Left lung (tissue), 14 donors: ENCODE measurements at regions of chr1 and their contacts with region 1.

Region 1: GRCh38 chr1:203273206-203273868 is 32.0 kb upstream of the BTG2 start:
- DNase-seq: peak; percentile 73 to 98 (median 89)
- ATAC-seq: peak; percentile 82
- H3K4me3 ChIP-seq: peak overlapping the region in 1 of 2 donors; percentile 44
- H3K27ac ChIP-seq: peak overlapping the region; percentile 72 to 92
- H3K4me1 ChIP-seq: peaks cover 9 to 88% of the 10 kb centered on the region in 2 donors
- H3K27me3 ChIP-seq: no peaks in the 10 kb centered on the region
- CTCF ChIP-seq: peak; percentile 97 to 99

Region 2: GRCh38 chr1:203026031-203026989 is 247.0 kb before region 1 on chr1 and contains the start of gene PPFIA4:
- intact Hi-C with region 1: no loop called
- DNase-seq: peak; percentile 81 to 97 (median 90)
- ATAC-seq: peak; percentile 97
- H3K4me3 ChIP-seq: peak within 1 kb of the TSS; percentile 48 to 50
- H3K27ac ChIP-seq: peak within 1 kb of the TSS; percentile 39 to 74
- H3K4me1 ChIP-seq: peaks cover 0 to 13% of the 10 kb centered on the region in 2 donors
- H3K27me3 ChIP-seq: peaks cover 4 to 20% of the 10 kb centered on the region in 2 donors
- CTCF ChIP-seq: no peak
- polyA plus RNA-seq, gene PPFIA4: 2.6 to 5.1 (median 3.6) TPM

Region 3: DNA sequence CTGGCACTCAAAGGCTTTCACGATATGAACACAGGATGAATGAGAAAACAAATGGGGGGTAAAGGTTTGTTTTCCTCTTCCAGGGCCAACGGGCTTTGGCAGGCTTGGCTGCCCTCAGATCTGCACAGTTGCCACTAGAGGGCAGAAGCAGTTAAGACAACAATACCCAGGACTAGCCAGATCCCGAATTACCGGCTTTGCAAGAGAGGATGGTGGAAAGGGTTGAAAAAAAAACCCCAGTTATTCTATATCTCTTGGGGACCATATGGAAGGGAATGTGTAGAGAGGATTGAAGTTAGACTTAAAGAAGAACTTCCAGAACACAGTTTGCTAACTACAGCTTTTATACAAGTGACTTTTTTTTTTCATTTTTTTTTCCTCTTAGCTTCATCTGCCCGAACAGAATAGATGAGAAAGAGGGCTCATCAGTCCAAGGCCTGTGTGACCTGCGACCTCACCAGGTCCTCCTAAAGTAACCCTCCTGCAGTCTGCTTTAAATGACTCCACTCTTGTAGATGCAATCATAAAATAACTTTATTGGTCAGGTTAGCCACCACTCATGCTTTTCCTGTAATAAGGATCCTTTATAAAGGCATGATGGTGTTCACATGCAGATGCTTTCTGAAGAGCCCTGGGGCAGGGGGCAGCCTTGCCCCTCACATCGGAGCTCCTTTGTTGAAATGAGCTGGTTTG is 66.9 kb after region 1 on chr1:
- intact Hi-C with region 1: loop called in 1 of 2 experiments (anchors 5 kb)
- DNase-seq: peak in 3 of 4 donors; percentile 68 to 91 (median 79)
- ATAC-seq: peak; percentile 88
- H3K4me3 ChIP-seq: no peak overlapping the region
- H3K27ac ChIP-seq: no peak overlapping the region
- H3K4me1 ChIP-seq: no peaks in the 10 kb centered on the region
- H3K27me3 ChIP-seq: peaks cover 0 to 22% of the 10 kb centered on the region in 2 donors
- CTCF ChIP-seq: peak; percentile 90 to 92

Region 4: DNA sequence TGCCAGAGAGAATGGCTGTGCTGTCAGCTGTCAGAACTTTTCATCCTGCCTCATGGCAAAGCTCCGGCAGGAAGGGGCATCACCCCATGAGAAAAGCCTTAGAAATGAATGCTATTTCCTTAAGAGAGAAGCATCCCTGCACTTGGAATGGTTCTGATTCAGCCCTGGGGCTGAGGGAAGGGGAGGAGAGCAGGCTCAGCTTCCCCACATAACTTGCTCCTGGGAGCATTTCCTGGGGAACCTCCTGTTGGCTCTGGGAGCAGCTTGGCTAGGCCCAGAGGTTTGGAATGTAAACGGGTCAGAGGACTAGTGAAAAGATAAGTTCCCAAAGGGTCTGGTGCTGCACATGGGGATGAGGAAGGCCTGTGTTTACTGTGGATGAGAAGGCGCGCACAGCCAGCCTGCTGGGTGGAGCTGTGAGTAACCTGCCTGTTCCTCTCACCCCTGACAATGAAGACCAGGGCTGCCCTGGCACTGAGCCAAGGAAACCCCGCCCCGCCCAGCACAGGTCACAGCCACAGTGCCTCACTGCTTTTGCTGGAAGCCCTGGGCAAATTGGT is 207.3 kb after region 1 on chr1:
- intact Hi-C with region 1: loop called in 1 of 2 experiments (anchors 10 kb)
- DNase-seq: peak in 3 of 4 donors; percentile 33 to 89 (median 57)
- ATAC-seq: peak; percentile 79
- H3K4me3 ChIP-seq: no peak overlapping the region
- H3K27ac ChIP-seq: peak overlapping the region; percentile 41 to 59
- H3K4me1 ChIP-seq: peaks cover 5 to 20% of the 10 kb centered on the region in 2 donors
- H3K27me3 ChIP-seq: no peaks in the 10 kb centered on the region
- CTCF ChIP-seq: no peak